Cardiac septum (tissue), 1 donor: ENCODE measurements at regions of chr19 and their contacts with region 1.

Region 1: GRCh38 chr19:39671738-39672363 is 16.1 kb downstream of the LGALS16 start:
- DNase-seq: no peak

Region 2: GRCh38 chr19:39480337-39481228 is 191.3 kb before region 1 on chr19 and contains the start of gene TIMM50:
- intact Hi-C with region 1: no loop called
- DNase-seq: peak; percentile 98
- total RNA-seq, gene TIMM50: 62.0 TPM

Region 3: DNA sequence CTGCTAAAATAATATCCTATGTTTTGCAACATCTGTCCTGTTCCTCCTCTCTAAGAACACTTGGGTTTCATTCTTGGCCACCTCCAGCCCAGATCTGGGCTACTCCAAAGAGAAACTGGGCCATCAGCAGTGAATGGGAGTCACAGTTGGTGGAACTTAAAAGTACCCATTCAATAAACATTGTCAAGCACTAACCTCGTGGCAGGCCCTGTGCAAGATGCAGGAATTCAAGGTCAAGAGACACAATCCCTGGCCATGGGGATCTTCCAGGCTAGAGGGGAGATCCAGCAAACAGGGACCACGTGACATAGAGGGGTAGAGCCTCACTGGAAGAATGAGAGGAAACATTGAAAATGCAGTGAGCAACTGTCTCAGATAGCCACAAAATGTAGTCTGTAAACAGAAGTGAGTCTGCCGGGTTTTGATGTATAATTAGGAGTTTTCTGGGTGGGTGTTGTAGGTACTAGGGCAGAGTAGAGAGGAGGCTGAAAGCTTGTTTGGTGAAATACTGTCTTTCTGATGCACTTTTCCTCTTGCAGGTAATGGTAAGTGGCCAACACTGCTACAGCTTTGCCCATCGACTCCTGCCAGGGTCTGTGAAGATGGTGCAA is 117.0 kb before region 1 on chr19:
- intact Hi-C with region 1: loop called (anchors 5 kb)
- DNase-seq: no peak